ENCODE measurements at regions of chr3 and their contacts with region 1.

Region 1: DNA sequence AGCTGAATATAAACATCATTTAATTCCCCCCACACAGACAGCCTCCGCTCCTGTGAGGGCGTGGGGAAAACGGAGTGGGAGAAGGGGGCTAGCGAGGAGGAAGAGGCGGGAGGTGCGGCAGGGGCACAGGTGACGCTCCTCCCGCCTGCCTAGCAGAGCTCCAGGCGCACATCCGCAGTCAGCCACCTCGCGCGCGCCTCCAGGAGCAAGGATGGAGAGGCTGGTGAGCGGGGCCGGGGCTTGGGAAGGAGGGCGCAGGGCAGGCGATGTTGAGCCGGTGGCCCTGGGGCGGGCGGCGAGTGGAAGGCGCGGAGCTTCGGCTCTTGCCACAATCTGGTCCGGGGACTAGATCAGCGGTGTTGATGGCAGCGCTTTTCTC is at the start of gene CD200:
- DNase-seq: peak; percentile 74 to 89
- ATAC-seq: peak; percentile 86
- H3K4me3 ChIP-seq: peak within 1 kb of the TSS; percentile 90 to 94
- H3K27ac ChIP-seq: peak within 1 kb of the TSS; percentile 18 to 95
- H3K4me1 ChIP-seq: peaks cover 0 to 1% of the 10 kb centered on the region in 2 donors
- H3K27me3 ChIP-seq: no peaks in the 10 kb centered on the region
- total RNA-seq, gene CD200: 28.2 to 45.3 TPM

Region 2: DNA sequence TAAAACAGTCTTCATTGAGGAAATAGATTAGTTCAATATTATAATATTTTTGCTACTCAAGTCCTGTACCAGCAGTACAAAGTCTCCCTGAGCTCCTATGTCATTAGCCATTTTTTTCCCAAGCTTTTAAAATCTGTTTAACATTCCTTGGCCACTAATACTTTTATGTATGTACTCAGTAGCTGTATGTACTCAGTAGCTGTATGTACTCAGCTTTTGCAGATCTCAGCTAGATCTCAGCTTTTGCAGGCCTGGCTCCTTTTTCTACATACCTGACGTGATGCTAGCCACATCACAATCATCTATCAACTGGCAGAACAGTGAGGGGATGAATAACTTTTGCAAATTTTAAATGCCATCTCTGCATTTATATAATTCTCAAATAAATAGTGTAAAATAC is 52.7 kb before region 1 on chr3:
- intact Hi-C with region 1: no loop called
- DNase-seq: no peak
- ATAC-seq: no peak
- H3K4me3 ChIP-seq: no peak overlapping the region
- H3K27ac ChIP-seq: no peak overlapping the region
- H3K4me1 ChIP-seq: no peaks in the 10 kb centered on the region
- H3K27me3 ChIP-seq: no peaks in the 10 kb centered on the region

Region 3: DNA sequence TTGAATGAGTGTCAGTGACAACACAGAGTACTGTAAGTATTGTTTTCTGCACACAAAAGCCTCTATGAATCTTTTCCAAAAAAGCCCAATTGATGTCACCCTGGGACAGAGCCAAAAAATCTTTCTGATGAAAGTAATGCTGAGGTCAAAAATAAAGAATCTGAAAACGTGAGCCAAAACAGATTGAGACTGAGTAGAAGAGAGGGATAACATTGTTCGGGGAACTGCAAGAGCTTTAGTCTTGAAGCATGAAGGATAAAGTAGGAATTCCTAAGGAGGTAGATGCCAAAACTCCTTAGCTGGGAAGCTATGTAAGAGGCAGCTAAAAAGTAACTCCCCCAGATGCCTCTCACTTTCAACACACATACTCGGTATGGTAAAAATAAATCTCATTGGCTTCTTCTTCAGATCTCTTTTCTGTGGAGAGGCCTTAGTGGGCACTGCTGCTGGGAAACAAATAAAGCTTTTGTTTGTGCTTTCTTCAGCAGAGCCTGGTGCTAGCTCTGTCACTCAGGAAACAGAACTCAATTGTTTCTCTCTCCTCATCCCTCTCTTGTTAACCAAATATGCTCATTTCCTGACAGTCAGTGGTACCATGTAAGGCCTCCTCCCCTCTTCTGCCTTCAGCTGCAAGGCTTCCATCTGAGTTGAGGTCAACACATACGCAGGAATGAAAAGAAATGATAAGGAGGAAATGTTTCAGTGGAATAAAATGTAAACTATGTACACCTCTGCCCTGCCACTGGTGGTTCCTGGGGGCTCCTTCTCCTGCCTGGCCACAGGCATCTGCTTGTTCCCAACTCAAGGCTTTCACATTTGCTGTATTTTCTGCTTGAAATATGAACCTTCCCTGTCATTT is 58.0 kb after region 1 on chr3:
- intact Hi-C with region 1: loop called (anchors 5 kb)
- DNase-seq: no peak
- ATAC-seq: peak; percentile 57
- H3K4me3 ChIP-seq: no peak overlapping the region
- H3K27ac ChIP-seq: peak overlapping the region; percentile 81 to 100
- H3K4me1 ChIP-seq: peaks cover 4 to 10% of the 10 kb centered on the region in 2 donors
- H3K27me3 ChIP-seq: no peaks in the 10 kb centered on the region

Region 4: GRCh38 chr3:112405845-112406244 is 72.9 kb after region 1 on chr3:
- intact Hi-C with region 1: loop called (anchors 5 kb)
- DNase-seq: no peak
- ATAC-seq: no peak
- H3K4me3 ChIP-seq: no peak overlapping the region
- H3K27ac ChIP-seq: no peak overlapping the region
- H3K4me1 ChIP-seq: peaks cover 0 to 8% of the 10 kb centered on the region in 2 donors
- H3K27me3 ChIP-seq: no peaks in the 10 kb centered on the region

Region 5: GRCh38 chr3:112411425-112411824 is 78.4 kb after region 1 on chr3:
- intact Hi-C with region 1: loop called (anchors 5 kb)
- DNase-seq: no peak
- ATAC-seq: peak; percentile 81
- H3K4me3 ChIP-seq: no peak overlapping the region
- H3K27ac ChIP-seq: peak overlapping the region; percentile 86 to 88
- H3K4me1 ChIP-seq: peaks cover 2 to 8% of the 10 kb centered on the region in 2 donors
- H3K27me3 ChIP-seq: no peaks in the 10 kb centered on the region

Region 6: DNA sequence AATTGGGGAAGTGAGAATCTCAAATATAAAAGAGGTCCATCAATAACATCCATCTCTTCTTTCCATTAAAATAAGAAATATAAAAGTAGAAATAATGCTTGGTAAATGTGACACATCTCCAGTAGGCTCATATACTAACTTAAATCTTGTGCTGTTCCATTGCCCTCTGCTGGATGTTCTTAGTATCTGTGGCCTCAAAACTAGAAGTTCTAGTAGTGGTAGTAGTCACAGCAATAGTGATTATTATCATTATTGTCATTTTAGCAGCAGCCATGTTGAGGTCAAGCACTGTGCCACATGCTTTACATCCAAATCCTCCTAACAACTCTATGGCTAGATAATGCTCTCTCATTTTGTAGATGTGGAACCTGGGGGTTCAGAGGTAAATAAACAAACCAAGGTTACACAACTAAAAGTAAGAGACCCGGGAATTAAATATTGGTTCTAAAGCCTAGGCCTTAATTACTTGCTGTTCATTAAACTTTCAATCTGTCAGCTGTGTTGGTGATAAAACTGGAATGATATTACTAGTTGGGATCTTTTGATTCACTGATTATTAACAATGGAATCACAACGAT is 186.5 kb after region 1 on chr3:
- intact Hi-C with region 1: loop called in 1 of 2 experiments (anchors 5 kb)
- DNase-seq: no peak
- ATAC-seq: peak; percentile 88
- H3K4me3 ChIP-seq: no peak overlapping the region
- H3K27ac ChIP-seq: no peak overlapping the region
- H3K4me1 ChIP-seq: no peaks in the 10 kb centered on the region
- H3K27me3 ChIP-seq: no peaks in the 10 kb centered on the region

Region 7: GRCh38 chr3:112539825-112540650 is 207.0 kb after region 1 on chr3:
- intact Hi-C with region 1: no loop called
- DNase-seq: no peak
- ATAC-seq: no peak
- H3K4me3 ChIP-seq: no peak overlapping the region
- H3K27ac ChIP-seq: no peak overlapping the region
- H3K4me1 ChIP-seq: no peaks in the 10 kb centered on the region
- H3K27me3 ChIP-seq: no peaks in the 10 kb centered on the region

Measured in aorta (tissue), 5 donors.